ENCODE measurements at regions of chr22 and their contacts with region 1.

Region 1: DNA sequence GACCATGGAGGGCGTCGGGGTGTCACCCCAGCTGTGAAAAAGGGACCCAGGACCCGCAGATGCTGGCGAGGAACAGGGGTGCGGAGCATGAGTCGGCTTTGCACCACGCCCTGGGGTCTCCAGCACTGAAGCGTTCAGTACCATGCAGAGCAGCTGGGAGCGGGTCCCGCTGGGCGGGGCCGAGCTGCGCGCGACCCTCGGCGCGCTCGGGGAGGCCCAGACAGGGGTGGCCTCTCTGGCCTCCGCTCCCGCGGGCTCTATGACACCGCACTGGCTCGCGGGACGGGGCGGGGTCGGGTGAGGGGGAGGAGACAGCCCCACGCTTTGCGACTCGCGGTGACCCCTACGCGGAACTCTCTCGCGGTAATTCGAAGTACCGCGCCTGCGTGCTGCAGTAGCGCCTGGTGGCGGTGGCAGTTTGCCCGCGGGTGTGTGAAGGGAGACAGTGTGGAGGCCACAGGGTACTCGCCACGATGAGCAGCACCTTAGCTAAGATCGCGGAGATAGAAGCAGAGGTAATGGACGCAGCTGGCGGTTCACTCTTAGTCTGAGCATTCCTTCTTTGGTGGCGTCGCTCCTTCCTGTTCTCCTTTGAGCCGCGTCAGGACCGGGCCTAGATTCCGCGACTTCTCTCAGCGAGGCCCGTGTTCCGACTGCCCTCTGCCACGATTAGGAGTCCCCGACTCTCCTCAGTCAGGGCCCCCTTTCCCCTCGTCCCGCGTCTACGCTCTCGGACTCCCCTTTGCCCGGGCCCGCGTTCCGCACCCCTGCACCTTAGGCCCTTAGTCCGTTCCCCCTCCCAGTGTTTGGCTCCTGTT is at the start of gene DRG1:
- DNase-seq: peak; percentile 97
- ATAC-seq: peak; percentile 99
- H3K4me3 Mint-ChIP-seq: peak within 1 kb of the TSS; percentile 98
- H3K27ac Mint-ChIP-seq: peak within 1 kb of the TSS; percentile 87
- H3K4me1 Mint-ChIP-seq: peaks cover 24% of the 10 kb centered on the region
- H3K27me3 Mint-ChIP-seq: no peaks in the 10 kb centered on the region
- CTCF ChIP-seq: no peak
- total RNA-seq, gene DRG1: 118 to 130 TPM

Region 2: GRCh38 chr22:31345331-31346254 is 53.8 kb before region 1 on chr22:
- CTCF ChIA-PET with region 1: interaction called, 5 read pairs
- POLR2A ChIA-PET with region 1: interaction called, 23 read pairs
- intact Hi-C with region 1: no loop called
- DNase-seq: peak; percentile 89
- ATAC-seq: peak; percentile 67
- H3K4me3 Mint-ChIP-seq: peak overlapping the region; percentile 94
- H3K27ac Mint-ChIP-seq: peak overlapping the region; percentile 94
- H3K4me1 Mint-ChIP-seq: peaks cover 33% of the 10 kb centered on the region
- H3K27me3 Mint-ChIP-seq: no peaks in the 10 kb centered on the region
- CTCF ChIP-seq: peak; percentile 88

Region 3: DNA sequence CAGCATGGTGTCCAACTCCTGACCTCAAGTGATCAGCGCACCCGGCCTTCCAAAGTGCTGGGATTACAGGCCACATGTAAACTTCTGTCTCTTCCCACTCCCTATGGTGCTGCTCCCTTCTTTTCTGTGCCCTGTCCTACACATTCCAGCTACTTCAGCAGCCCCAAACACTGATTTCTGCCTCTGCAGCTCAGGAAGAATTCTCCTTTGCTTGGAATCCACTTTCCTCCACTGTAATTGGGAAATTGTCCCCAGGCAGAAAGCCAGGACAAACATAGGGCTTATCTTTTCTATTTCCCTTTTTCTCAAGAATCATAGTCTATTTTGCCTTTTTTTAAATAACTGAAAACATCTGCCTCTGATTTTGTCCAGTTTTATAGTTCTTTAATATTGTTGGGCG is 21.3 kb before region 1 on chr22:
- CTCF ChIA-PET with region 1: no interaction called
- POLR2A ChIA-PET with region 1: no interaction called
- intact Hi-C with region 1: no loop called
- DNase-seq: no peak
- ATAC-seq: no peak
- H3K4me3 Mint-ChIP-seq: no peak overlapping the region
- H3K27ac Mint-ChIP-seq: no peak overlapping the region
- H3K4me1 Mint-ChIP-seq: peaks cover 3% of the 10 kb centered on the region
- H3K27me3 Mint-ChIP-seq: no peaks in the 10 kb centered on the region
- CTCF ChIP-seq: no peak